Left ventricle myocardium superior (tissue), 1 donor: ENCODE measurements at regions of chr1 and their contacts with region 1.

Region 1: DNA sequence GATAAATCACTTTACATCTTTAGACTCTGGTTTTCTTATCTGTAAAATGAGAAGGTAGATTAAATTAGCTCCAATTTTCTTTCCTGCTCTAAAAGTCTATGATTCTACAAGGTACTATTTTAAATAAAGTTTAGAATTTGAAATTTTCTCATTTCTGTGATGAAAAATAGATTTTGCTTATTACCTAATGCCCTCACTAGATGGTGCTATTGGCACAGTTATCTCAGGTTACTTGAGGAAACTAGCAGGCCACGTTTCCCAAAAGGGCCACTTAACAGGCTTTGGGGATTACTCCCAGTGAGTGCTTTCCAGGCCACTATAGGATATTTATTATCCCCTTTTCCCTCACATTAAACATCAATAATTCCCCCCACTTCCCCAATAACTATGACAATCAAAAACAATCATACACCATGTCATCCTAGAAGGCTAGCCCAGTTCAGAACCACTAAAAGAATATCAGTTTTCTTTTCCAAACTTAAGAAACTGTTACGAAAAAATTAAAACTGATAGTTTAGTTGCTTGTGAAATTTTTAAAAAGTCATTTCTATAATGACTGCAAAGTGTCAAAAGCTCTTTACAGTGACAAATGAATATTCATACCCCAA is 30.6 kb downstream of the OMA1 start:
- DNase-seq: no peak
- ATAC-seq: peak; percentile 65

Region 2: GRCh38 chr1:58546520-58547308 is 30.8 kb after region 1 on chr1 and contains the start of gene OMA1:
- intact Hi-C with region 1: no loop called
- DNase-seq: peak; percentile 99
- ATAC-seq: peak; percentile 99
- total RNA-seq, gene OMA1: 29.4 TPM

Region 3: DNA sequence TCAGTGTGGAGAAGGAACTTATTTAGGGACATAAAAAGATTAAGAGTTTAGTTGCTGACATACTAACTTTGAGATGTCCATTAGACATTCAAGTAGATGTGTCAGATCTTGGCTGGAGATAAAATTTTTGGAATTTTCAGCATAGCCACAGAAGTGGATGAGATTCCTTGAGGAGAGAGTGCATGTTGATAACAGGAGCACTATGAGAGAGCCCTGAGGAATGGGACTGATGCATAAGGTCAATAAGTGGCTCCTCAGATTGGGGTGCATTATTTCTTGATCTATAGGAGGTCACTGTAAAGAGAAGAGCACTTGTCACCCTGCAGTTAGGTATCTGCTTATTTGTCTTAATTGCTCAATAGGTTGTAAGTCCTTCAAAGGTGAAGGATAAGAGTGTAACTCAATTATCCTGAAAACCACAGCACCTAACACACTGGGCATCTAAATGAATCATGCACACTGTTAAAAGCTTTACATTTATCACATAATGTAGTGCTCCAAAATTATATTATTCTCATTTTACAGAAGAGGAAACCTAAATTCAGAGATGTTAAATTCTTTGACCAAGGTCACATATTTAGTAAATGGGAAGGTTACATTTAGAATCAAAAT is 113.2 kb after region 1 on chr1:
- intact Hi-C with region 1: no loop called
- DNase-seq: no peak
- ATAC-seq: no peak

Region 4: DNA sequence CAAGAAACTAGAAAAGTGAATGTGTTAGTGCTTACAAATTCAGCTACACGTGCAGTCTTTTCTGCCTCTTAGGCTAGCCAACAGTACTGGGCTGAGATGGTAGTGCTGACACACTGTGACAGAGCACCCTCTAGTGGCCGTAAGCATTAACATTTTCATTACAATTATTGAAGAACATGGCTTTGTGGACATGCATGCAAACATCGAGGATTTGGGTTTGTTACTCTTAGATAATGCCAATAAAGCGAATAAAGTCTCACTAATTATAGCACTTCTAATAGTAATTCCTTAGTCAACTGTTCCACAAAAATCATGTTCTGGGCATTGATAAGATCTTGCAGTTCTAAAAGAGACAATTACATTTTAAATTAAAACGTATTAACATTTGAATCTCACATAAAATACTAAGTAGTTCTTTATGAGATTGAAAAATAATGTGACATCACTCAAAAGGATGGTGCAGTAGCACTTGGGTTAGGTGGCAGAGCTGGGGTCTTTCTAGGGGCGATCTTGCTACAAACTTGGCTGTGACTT is 136.8 kb after region 1 on chr1:
- intact Hi-C with region 1: loop called (anchors 5 kb)
- DNase-seq: no peak
- ATAC-seq: peak; percentile 91

Region 5: GRCh38 chr1:58718435-58718834 is 202.5 kb after region 1 on chr1:
- intact Hi-C with region 1: no loop called
- DNase-seq: no peak
- ATAC-seq: peak; percentile 61